Brain microvascular endothelial cell (primary cell): ENCODE measurements at regions of chr17 and their contacts with region 1.

Region 1: GRCh38 chr17:11997147-11997846 is at the start of gene ZNF18:
- DNase-seq: peak; percentile 92
- H3K4me3 ChIP-seq: peak within 1 kb of the TSS; percentile 89
- H3K27ac ChIP-seq: peak within 1 kb of the TSS; percentile 77
- H3K27me3 ChIP-seq: no peaks in the 10 kb centered on the region
- CTCF ChIP-seq: no peak

Region 2: DNA sequence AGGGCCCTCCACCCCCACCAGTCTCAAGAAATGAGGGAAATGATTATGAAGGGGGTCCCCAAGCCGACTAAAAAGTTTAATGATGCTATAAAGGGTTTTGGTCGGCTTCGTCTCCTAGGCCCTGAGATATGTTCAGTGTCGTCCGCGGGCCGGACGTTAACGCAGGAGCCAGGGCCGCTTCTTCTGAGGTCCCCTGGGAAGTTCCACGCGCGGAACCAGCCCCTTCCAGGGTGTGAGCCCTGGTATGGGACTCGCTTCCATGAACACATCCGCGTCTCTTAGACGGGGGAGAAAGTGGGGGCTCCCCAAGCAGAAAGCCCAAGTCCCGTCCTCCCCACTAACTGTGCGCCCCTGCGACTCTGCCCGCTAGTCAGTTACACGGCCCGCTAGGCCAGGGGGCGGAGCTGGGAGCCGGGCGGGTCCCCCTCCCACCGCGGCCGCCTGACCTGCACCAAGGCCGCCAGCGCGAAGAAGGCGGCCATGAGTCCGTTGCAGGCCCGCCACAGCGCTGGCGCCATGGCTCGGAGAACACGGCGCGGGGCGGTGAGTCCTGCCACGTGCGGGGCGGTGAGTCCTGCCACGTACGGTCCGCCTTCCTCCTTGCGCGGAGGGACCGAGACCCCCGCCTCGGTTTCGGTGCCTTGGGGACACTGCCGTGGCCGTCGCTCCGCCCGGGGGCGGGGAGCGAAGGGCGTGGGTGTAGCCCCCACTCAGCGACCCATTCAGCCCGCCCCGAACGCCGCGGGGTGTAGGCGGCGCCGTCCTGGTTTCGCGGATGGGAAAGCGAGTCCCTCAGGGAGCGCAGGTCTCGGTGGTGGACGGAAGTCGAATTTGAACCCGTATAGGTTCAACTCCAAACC is 1267.7 kb before region 1 on chr17 and contains the start of gene TMEM220:
- in situ Hi-C with region 1: loop called (anchors 25 kb)
- DNase-seq: peak; percentile 27
- H3K4me3 ChIP-seq: peak within 1 kb of the TSS; percentile 66
- H3K27ac ChIP-seq: peak within 1 kb of the TSS; percentile 41
- H3K27me3 ChIP-seq: no peaks in the 10 kb centered on the region
- CTCF ChIP-seq: no peak